ENCODE measurements at regions of chr10 and their contacts with region 1.

Region 1: GRCh38 chr10:67849331-67850011 is 11.5 kb upstream of the DNAJC12 start:
- DNase-seq: peak; percentile 87
- ATAC-seq: peak; percentile 100
- H3K4me3 ChIP-seq: peak overlapping the region; percentile 81 to 99
- H3K27ac ChIP-seq: peak overlapping the region; percentile 96
- H3K4me1 ChIP-seq: no peaks in the 10 kb centered on the region
- H3K27me3 ChIP-seq: no peaks in the 10 kb centered on the region
- CTCF ChIP-seq: no peak

Region 2: GRCh38 chr10:67788025-67788886 is 61.2 kb before region 1 on chr10:
- CTCF ChIA-PET with region 1: no interaction called
- POLR2A ChIA-PET with region 1: no interaction called
- in situ Hi-C with region 1: no loop called
- intact Hi-C with region 1: no loop called
- DNase-seq: peak; percentile 24
- ATAC-seq: peak; percentile 84
- H3K4me3 ChIP-seq: no peak overlapping the region
- H3K27ac ChIP-seq: no peak overlapping the region
- H3K4me1 ChIP-seq: no peaks in the 10 kb centered on the region
- H3K27me3 ChIP-seq: no peaks in the 10 kb centered on the region; the same call in 1 of the 2 replicates
- CTCF ChIP-seq: peak; percentile 91

Region 3: DNA sequence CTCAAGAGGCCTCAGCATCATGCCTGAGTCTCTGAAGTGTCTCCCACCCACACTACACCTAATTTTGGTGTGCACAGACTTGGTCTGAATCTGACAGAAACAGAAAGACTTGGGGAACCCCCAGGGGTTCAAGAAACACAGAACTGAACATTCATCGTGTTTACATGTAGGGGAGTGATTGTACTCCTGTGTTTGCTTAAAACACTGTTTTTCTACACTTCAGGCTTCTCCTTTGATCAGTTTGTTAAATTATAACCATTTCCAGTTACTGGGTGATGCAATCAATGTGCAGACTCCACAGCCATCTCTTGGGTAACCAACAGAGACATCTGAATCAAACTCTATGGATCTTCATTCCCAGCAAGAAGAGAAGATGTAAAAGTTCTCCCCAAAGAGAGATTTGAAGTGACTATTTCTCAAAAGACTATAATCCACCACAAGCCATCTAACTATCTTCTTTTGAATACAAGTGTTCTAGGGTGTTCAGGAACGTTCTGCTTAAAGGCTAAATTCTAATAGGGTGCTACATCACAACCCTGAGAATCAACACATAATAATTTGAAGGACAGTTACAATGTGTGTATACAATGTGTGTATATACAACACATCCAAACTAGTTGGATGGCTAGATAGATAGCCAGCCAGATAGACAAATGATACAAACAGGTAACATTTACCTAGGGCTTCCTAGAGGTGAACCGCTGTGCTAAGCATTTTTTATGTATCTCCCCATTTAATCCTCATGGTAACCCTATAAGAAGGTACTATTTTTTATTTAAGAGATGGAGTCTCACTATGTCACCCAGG is 45.7 kb before region 1 on chr10:
- CTCF ChIA-PET with region 1: no interaction called
- POLR2A ChIA-PET with region 1: no interaction called
- in situ Hi-C with region 1: no loop called
- intact Hi-C with region 1: no loop called
- DNase-seq: no peak
- ATAC-seq: no peak
- H3K4me3 ChIP-seq: no peak overlapping the region
- H3K27ac ChIP-seq: no peak overlapping the region
- H3K4me1 ChIP-seq: no peaks in the 10 kb centered on the region
- H3K27me3 ChIP-seq: no peaks in the 10 kb centered on the region
- CTCF ChIP-seq: no peak

Region 4: DNA sequence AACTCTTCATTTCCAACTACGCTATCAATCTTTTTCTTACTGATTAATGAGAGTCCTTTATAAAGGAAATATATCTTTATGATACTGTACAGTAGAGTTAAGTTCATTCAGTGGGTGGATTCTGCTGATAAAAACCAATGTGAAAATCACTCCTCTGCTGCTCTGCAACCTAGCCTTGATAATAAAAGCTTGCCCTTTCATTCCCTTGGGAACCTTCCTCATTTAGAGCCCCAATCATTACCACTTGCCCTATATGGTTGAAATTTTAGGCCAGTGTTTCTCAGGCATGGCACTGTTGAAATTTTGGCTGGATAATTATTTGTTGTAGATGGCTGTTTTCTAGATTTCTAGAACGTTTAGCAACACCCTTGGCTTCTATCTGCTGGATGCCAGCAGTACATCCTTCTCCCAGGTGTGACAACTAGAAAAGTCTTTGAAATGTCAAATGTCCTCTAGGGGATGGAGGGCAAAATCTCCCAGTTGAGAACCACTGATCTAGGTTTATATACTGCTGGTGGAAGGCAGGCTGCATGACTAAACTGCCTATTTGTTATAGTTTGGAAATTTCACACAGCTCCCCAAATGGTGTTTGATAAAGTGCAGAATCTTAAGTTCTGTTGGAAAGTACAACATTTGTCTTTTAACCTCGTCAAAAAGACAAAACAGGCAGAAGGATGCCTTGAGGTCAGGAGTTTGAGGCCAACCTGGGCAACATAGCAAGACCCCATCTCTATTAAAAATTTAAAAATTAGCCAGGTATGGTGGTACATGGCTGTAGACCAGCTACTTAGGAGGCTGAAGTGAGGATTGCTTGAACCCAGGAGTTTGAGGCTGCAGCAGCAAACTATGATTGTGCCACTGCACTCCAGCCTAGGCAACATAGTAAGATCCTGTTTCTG is 26.1 kb after region 1 on chr10:
- CTCF ChIA-PET with region 1: no interaction called
- POLR2A ChIA-PET with region 1: no interaction called
- in situ Hi-C with region 1: no loop called
- intact Hi-C with region 1: no loop called
- DNase-seq: no peak
- ATAC-seq: no peak
- H3K4me3 ChIP-seq: no peak overlapping the region
- H3K27ac ChIP-seq: no peak overlapping the region
- H3K4me1 ChIP-seq: no peaks in the 10 kb centered on the region
- H3K27me3 ChIP-seq: no peaks in the 10 kb centered on the region
- CTCF ChIP-seq: no peak

Region 5: GRCh38 chr10:69449841-69450240 is 1600.4 kb after region 1 on chr10:
- CTCF ChIA-PET with region 1: no interaction called
- POLR2A ChIA-PET with region 1: interaction called, 10 read pairs
- in situ Hi-C with region 1: no loop called
- intact Hi-C with region 1: no loop called
- DNase-seq: peak; percentile 69
- ATAC-seq: peak; percentile 69
- H3K4me3 ChIP-seq: peak overlapping the region; percentile 69 to 84; a peak in 3 of 4 replicates
- H3K27ac ChIP-seq: peak overlapping the region; percentile 84
- H3K4me1 ChIP-seq: peaks cover 79% of the 10 kb centered on the region
- H3K27me3 ChIP-seq: no peaks in the 10 kb centered on the region
- CTCF ChIP-seq: peak; percentile 91

Measured in Panc1 (cell line).